Activated CD8-positive, alpha-beta T cell treated with anti-CD3 and anti-CD28 coated beads for 36 hours (primary cell): ENCODE measurements at regions of chr12 and their contacts with region 1.

Region 1: GRCh38 chr12:43882578-43883178 is 46.8 kb downstream of the TMEM117 start:
- DNase-seq: peak; percentile 45
- ATAC-seq: peak; percentile 92
- H3K4me3 Mint-ChIP-seq: no peak overlapping the region
- H3K27ac Mint-ChIP-seq: no peak overlapping the region
- H3K4me1 Mint-ChIP-seq: no peaks in the 10 kb centered on the region
- H3K27me3 Mint-ChIP-seq: no peaks in the 10 kb centered on the region
- CTCF ChIP-seq: peak; percentile 81

Region 2: DNA sequence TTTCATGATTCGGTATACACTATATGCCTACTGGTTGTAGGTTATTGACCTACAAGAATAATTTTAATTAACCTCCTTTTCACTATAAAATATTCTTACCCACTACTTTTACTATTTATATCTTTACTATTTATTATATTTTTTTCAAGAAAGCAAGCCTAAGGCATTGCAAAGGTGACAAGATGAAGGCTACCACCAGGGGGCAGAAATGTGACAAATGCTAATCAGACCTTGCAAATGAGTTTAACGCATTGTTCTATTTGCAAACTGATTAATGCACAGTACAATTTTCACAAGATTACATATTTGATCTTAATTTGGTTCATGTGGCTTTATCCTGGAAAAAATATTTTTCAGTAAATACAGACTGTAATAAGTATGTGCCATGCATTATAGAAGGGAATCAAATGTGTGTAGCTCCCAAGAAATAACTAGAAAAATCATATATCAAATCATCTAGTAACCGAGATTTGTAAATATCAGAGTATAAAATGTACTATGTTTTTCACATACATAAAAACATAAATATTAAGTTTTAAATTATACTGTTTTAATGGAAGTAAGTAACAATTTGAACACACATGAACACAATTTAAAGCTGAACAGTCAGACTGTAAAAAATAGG is 437.6 kb before region 1 on chr12:
- CTCF ChIA-PET with region 1: interaction called, 11 read pairs
- POLR2A ChIA-PET with region 1: no interaction called
- intact Hi-C with region 1: loop called (anchors 10 kb)
- DNase-seq: peak; percentile 77
- ATAC-seq: no peak
- H3K4me3 Mint-ChIP-seq: no peak overlapping the region
- H3K27ac Mint-ChIP-seq: no peak overlapping the region
- H3K4me1 Mint-ChIP-seq: no peaks in the 10 kb centered on the region
- H3K27me3 Mint-ChIP-seq: peaks cover 4% of the 10 kb centered on the region
- CTCF ChIP-seq: peak; percentile 84

Region 3: GRCh38 chr12:43758728-43759563 is 123.7 kb before region 1 on chr12 and contains the starts of genes IRAK4 and PUS7L:
- CTCF ChIA-PET with region 1: interaction called, 14 read pairs
- POLR2A ChIA-PET with region 1: no interaction called
- intact Hi-C with region 1: loop called (anchors 1 kb)
- DNase-seq: peak; percentile 98
- ATAC-seq: peak; percentile 97
- H3K4me3 Mint-ChIP-seq: peak within 1 kb of the TSS; percentile 93
- H3K27ac Mint-ChIP-seq: peak within 1 kb of the TSS; percentile 98
- H3K4me1 Mint-ChIP-seq: peaks cover 62% of the 10 kb centered on the region
- H3K27me3 Mint-ChIP-seq: no peaks in the 10 kb centered on the region
- CTCF ChIP-seq: no peak
- total RNA-seq, gene IRAK4: 24.0 TPM
- total RNA-seq, gene PUS7L: 16.7 to 18.7 TPM

Region 4: GRCh38 chr12:43776498-43776897 is 106.2 kb before region 1 on chr12:
- CTCF ChIA-PET with region 1: interaction called, 36 read pairs
- POLR2A ChIA-PET with region 1: no interaction called
- intact Hi-C with region 1: loop called (anchors 2 kb)
- DNase-seq: peak; percentile 27
- ATAC-seq: peak; percentile 55
- H3K4me3 Mint-ChIP-seq: no peak overlapping the region
- H3K27ac Mint-ChIP-seq: no peak overlapping the region
- H3K4me1 Mint-ChIP-seq: no peaks in the 10 kb centered on the region
- H3K27me3 Mint-ChIP-seq: no peaks in the 10 kb centered on the region
- CTCF ChIP-seq: peak; percentile 42

Region 5: DNA sequence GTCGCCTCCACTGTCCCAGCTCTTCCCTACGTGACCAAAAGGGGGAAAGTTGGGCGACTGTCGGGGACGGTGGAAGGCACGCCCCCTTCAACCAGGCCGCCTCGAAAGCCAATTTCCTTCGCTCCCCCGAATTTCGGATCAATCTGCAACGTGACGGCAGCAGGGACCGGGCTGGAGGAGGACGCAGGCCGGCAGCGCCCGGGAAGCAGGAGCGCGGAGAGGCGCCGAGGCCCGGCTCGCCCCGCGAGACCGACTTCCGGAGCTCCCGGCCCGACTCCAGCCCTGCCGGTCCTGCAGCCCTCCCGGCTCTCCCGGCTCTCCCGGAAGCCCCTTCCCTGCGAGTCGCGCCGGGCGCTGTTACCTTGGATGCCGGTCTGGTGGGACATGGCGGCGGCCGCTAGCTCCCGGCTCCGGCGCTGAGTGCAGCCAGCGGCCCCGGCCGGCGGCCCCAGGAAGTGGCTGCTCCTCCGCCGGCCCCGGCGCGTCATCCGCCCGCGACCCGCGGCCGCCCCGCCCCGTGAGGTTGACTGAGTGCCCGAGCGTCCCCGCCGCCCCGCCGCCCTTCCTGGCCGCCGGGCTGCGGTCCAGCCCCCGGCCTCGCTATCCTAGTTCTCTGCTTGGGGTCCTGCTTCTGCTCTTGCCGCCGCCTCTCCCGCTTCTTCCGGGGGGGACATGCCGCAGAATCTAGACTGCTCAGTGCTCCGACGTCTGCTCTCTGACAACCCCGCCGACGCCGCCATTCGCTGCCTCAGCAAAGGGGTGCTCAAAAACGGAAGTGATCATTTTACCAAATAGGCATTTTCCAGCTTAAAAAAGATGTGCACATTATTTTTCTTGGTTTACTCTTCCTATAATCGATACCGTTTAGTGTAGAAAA is 76.6 kb before region 1 on chr12 and contains the start of gene TWF1:
- CTCF ChIA-PET with region 1: interaction called, 34 read pairs
- POLR2A ChIA-PET with region 1: no interaction called
- intact Hi-C with region 1: no loop called
- DNase-seq: peak; percentile 90
- ATAC-seq: peak; percentile 94
- H3K4me3 Mint-ChIP-seq: peak within 1 kb of the TSS; percentile 82
- H3K27ac Mint-ChIP-seq: peak within 1 kb of the TSS; percentile 100
- H3K4me1 Mint-ChIP-seq: peaks cover 34% of the 10 kb centered on the region
- H3K27me3 Mint-ChIP-seq: no peaks in the 10 kb centered on the region
- CTCF ChIP-seq: no peak
- total RNA-seq, gene TWF1: 17.0 to 18.9 TPM

Region 6: DNA sequence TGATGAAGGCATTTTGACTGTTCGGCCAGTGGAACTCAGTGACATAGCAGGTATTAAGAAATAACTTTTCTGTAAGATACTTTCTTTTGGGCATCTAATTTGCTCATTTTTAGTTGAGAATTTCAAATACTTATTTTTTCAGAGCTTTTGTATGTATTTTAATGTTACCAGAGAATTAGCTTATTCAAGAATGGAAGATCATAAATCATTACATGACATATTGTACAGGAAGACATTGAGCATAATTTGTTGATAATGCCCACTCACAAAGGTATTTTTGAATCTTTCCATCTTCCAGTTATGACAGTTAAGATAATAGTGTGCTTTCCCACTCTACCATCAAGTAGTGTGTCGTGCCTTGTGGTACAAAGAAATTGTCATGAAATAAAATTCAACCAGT is 10.3 kb before region 1 on chr12:
- CTCF ChIA-PET with region 1: interaction called, 19 read pairs
- POLR2A ChIA-PET with region 1: no interaction called
- intact Hi-C with region 1: no loop called
- DNase-seq: no peak
- ATAC-seq: no peak
- H3K4me3 Mint-ChIP-seq: no peak overlapping the region
- H3K27ac Mint-ChIP-seq: no peak overlapping the region
- H3K4me1 Mint-ChIP-seq: no peaks in the 10 kb centered on the region
- H3K27me3 Mint-ChIP-seq: no peaks in the 10 kb centered on the region
- CTCF ChIP-seq: no peak

Region 7: DNA sequence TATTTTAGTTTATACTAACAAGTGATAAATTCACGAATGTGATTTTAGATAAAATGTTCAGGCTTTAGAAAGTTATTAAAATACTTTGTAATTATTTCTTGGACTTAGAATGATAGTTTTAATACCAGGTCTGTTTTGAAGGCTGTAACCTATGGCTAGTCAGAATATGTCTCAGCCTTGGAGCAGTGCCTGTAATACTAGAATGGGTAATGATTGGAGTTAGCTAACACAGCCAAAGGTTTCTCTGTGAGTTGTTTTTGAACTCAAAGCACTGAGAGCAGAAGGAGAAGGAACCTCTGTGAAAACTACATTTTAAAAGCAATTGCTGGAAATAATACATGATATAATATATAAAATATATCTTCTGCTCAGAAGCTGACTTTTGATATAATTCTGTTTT is 63.3 kb after region 1 on chr12:
- CTCF ChIA-PET with region 1: no interaction called
- POLR2A ChIA-PET with region 1: no interaction called
- intact Hi-C with region 1: no loop called
- DNase-seq: no peak
- ATAC-seq: no peak
- H3K4me3 Mint-ChIP-seq: no peak overlapping the region
- H3K27ac Mint-ChIP-seq: no peak overlapping the region
- H3K4me1 Mint-ChIP-seq: no peaks in the 10 kb centered on the region
- H3K27me3 Mint-ChIP-seq: no peaks in the 10 kb centered on the region
- CTCF ChIP-seq: no peak